Mammary epithelial cell (primary cell): ENCODE measurements at regions of chr4 and their contacts with region 1.

Region 1: DNA sequence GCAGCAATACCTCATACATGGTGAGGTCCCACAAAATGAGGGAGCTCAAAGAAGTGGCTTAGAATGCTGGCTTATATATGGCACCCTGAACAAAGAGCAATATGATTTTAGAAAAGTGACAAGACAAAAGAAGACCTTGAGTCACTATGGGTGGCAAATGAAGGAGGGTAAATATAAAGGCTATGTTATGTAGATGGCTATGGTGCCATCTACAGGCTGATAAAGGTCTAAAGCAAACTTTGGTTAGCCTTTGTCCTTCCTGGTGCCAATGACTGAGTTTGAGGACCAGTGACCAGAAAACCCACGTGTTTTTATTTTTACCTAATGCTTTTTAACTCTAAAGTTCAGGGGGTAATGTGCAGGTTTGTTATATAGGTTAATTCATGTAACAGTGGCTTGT is 151.8 kb downstream of the CCNG2 start:
- DNase-seq: peak; percentile 38
- H3K4me3 ChIP-seq: no peak overlapping the region
- H3K27ac ChIP-seq: no peak overlapping the region
- H3K4me1 ChIP-seq: no peaks in the 10 kb centered on the region
- H3K27me3 ChIP-seq: no peaks in the 10 kb centered on the region
- CTCF ChIP-seq: peak; percentile 51 to 64

Region 2: DNA sequence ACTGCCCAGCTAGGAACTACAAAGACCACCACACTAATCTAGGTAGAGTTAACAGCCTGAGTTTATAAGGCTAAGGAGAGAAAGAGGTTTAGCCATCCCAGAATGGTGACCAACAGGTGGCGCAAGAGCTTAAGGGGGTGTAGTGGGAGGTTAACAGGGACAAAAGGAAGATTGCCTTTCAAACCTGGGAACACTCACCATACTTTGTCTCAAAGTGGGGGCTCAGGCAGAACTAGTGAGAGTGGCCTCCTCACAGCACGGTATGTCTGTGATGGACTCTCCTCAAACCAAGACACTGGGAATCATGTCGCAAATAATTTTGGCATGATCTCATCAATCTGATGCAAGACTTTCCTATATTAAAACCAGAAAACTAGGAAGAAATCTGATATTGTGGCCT is 256.5 kb before region 1 on chr4:
- CTCF ChIA-PET with region 1: no interaction called
- dilution Hi-C with region 1: loop called (anchors 25 kb)
- in situ Hi-C with region 1: loop called in 1 of 2 experiments (anchors 25 kb)
- intact Hi-C with region 1: loop called (anchors 2 kb)
- DNase-seq: peak; percentile 46
- H3K4me3 ChIP-seq: no peak overlapping the region
- H3K27ac ChIP-seq: peak overlapping the region; percentile 51
- H3K4me1 ChIP-seq: peaks cover 31% of the 10 kb centered on the region
- H3K27me3 ChIP-seq: no peaks in the 10 kb centered on the region
- CTCF ChIP-seq: peak; percentile 71 to 80

Region 3: DNA sequence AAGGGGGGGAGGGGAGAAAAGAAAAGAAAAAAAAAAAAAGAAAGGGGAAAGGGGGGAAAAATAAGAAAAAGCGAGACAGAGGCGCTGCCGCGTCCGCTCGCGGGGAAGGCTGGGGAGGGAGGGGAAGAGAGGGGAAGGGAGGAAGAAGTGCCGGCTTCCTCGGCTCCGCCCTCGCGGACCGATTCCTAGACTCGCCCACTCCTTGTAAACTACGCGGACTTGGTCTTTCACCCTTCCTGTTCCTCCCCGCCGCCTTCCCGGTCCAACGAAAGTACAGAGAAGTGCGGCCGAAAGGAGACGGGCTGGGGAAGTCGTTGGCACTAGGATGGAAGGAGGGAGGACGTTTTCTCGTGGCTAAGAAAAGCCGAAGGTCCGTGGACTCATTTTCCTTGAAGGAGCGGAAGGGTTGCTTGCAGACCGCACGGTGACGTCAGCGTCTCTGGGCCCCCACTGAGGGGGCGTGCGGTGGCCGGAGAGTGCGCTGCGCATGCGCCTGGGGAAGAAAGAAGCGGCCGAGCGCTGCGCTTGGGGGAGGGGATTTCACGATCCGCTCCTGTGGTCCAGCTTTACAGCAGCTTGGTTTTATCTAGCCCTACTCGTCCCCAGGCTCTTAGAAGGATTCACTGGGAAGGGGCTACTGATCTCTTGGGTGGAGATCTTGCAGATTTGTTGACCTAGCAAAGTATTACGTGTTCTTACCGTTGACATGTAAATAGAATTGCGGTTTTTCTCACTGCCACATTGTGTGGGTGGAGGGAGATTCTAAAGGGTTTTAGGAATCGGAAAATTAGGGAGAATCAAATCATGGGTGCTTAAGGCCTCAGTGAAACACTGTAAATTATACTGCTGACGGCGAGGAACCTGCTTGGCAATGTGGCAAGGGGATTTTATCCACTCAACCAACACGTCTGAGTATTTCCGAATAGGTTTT is 232.7 kb before region 1 on chr4 and contains the start of gene CCNI:
- CTCF ChIA-PET with region 1: no interaction called
- dilution Hi-C with region 1: loop called (anchors 25 kb)
- in situ Hi-C with region 1: no loop called
- intact Hi-C with region 1: no loop called
- DNase-seq: peak; percentile 96
- H3K4me3 ChIP-seq: peak within 1 kb of the TSS; percentile 73 to 92 (median 83)
- H3K27ac ChIP-seq: peak within 1 kb of the TSS; percentile 96
- H3K4me1 ChIP-seq: peaks cover 14% of the 10 kb centered on the region
- H3K27me3 ChIP-seq: no peaks in the 10 kb centered on the region
- CTCF ChIP-seq: no peak
- total RNA-seq, gene CCNI: 177 to 250 TPM

Region 4: GRCh38 chr4:77240469-77241066 is 68.3 kb before region 1 on chr4:
- CTCF ChIA-PET with region 1: no interaction called
- dilution Hi-C with region 1: no loop called
- in situ Hi-C with region 1: loop called (anchors 5 kb)
- intact Hi-C with region 1: loop called (anchors 1 kb)
- DNase-seq: peak; percentile 28
- H3K4me3 ChIP-seq: no peak overlapping the region
- H3K27ac ChIP-seq: no peak overlapping the region
- H3K4me1 ChIP-seq: no peaks in the 10 kb centered on the region
- H3K27me3 ChIP-seq: no peaks in the 10 kb centered on the region
- CTCF ChIP-seq: peak; percentile 91 to 93

Region 5: DNA sequence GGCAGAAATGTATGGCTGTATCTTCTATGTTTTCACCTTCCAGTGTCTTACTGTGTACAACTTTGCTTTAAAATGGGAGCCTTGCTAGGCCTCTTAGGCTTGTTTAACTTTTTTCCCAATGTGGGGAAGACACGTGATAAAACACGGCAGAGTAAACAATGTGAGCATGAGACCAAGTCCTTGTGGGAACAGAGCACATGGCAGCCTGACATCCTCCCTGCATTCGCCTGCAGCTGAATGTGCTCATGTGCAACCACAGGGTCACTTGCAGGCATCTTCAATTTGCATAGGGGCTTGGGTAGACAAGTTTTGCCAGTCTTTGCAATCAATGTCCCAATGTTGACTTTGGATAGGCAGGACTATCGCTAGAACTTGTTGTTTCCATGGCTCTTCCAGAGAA is 60.0 kb before region 1 on chr4:
- CTCF ChIA-PET with region 1: no interaction called
- dilution Hi-C with region 1: no loop called
- in situ Hi-C with region 1: loop called (anchors 5 kb)
- intact Hi-C with region 1: no loop called
- DNase-seq: no peak
- H3K4me3 ChIP-seq: no peak overlapping the region
- H3K27ac ChIP-seq: no peak overlapping the region
- H3K4me1 ChIP-seq: no peaks in the 10 kb centered on the region
- H3K27me3 ChIP-seq: no peaks in the 10 kb centered on the region
- CTCF ChIP-seq: no peak

Region 6: GRCh38 chr4:77254921-77255320 is 53.9 kb before region 1 on chr4:
- CTCF ChIA-PET with region 1: no interaction called
- dilution Hi-C with region 1: loop called (anchors 5 kb)
- in situ Hi-C with region 1: no loop called
- intact Hi-C with region 1: no loop called
- DNase-seq: no peak
- H3K4me3 ChIP-seq: no peak overlapping the region
- H3K27ac ChIP-seq: no peak overlapping the region
- H3K4me1 ChIP-seq: no peaks in the 10 kb centered on the region
- H3K27me3 ChIP-seq: no peaks in the 10 kb centered on the region
- CTCF ChIP-seq: no peak

Region 7: GRCh38 chr4:77358315-77358928 is 49.6 kb after region 1 on chr4:
- CTCF ChIA-PET with region 1: no interaction called
- dilution Hi-C with region 1: no loop called
- in situ Hi-C with region 1: no loop called
- intact Hi-C with region 1: loop called (anchors 1 kb)
- DNase-seq: peak; percentile 37
- H3K4me3 ChIP-seq: no peak overlapping the region
- H3K27ac ChIP-seq: no peak overlapping the region
- H3K4me1 ChIP-seq: peaks cover 10% of the 10 kb centered on the region
- H3K27me3 ChIP-seq: no peaks in the 10 kb centered on the region
- CTCF ChIP-seq: peak; percentile 53 to 74

Region 8: GRCh38 chr4:77385124-77385969 is 76.5 kb after region 1 on chr4:
- CTCF ChIA-PET with region 1: no interaction called
- dilution Hi-C with region 1: no loop called
- in situ Hi-C with region 1: no loop called
- intact Hi-C with region 1: no loop called
- DNase-seq: peak; percentile 53
- H3K4me3 ChIP-seq: no peak overlapping the region
- H3K27ac ChIP-seq: no peak overlapping the region
- H3K4me1 ChIP-seq: no peaks in the 10 kb centered on the region
- H3K27me3 ChIP-seq: peaks cover 10% of the 10 kb centered on the region
- CTCF ChIP-seq: peak; percentile 86 to 87